Activated T-helper 2 cell treated with anti-CD3 and anti-CD28 coated beads, Interferon-gamma antibody, Interleukin-2, Interleukin-4, amounts not matched to agents 10 μg/mL and 5 μg/mL and 100 μg/mL, durations not matched to agents 14 hours and 24 hours and 36 hours (primary cell): ENCODE measurements at regions of chrX and their contacts with region 1.

Region 1: DNA sequence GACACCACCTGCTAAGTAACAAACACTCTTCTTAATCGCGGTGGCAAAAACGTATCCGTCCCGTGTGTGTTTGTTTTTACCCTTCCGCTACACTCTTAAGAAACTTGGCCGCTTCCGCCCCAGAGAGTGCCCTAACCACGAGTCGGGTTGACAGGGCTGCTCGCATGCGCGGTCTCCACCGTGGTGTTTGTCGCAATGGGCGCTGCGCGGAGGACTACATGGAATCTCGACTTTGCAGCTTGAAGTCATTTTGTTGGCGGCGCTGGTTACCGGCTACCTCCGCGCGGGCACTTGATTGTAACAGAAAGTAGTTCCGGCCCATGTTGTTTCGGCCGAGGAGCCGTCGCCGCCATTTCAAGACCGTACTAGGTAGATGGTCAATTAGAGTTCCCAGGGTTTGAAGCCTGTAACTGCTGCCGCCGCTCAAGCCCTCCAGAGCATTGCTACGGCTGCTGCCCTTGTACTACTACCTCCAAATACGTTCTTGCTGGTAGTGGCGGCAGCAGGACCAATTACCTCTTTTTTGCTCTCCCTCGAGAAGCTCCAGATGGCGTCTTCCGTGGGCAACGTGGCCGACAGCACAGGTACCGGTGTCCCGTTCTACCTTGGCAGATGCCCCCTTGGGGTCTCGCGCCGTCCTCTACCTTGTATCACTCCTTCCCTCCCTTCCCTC is at the start of gene OGT:
- DNase-seq: peak; percentile 92
- H3K4me3 Mint-ChIP-seq: peak within 1 kb of the TSS; percentile 99
- H3K27ac Mint-ChIP-seq: peak within 1 kb of the TSS; percentile 99
- H3K4me1 Mint-ChIP-seq: peaks cover 22% of the 10 kb centered on the region
- H3K27me3 Mint-ChIP-seq: no peaks in the 10 kb centered on the region
- total RNA-seq, gene OGT: 224 and 231 TPM in 2 replicates

Region 2: DNA sequence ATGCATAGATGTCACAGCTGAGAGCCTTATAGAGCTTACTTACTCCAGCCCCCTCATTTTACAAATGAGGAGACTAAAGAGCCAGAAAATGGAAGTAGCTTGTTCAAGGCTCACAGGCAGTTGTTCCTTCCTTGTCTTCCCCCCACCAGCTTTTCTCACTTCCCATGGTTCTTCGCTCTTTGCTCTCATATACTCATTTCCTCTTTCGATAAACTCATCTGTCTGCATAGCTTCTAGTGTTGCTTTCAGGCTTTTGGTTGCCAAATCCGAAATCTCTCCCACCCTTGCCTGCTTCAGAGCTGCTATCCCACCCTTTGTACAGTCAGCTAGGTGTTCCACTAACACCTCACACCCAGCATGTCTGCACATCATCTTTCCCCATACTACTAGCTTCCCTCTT is 334.8 kb before region 1 on chrX:
- intact Hi-C with region 1: loop called (anchors 10 kb)
- DNase-seq: no peak
- H3K4me3 Mint-ChIP-seq: peak overlapping the region; percentile 86
- H3K27ac Mint-ChIP-seq: peak overlapping the region; percentile 88
- H3K4me1 Mint-ChIP-seq: peaks cover 15% of the 10 kb centered on the region
- H3K27me3 Mint-ChIP-seq: no peaks in the 10 kb centered on the region

Region 3: GRCh38 chrX:71365876-71366673 is 166.8 kb before region 1 on chrX and contains the start of gene TAF1:
- intact Hi-C with region 1: loop called (anchors 1 kb)
- DNase-seq: peak; percentile 88
- H3K4me3 Mint-ChIP-seq: peak within 1 kb of the TSS; percentile 98
- H3K27ac Mint-ChIP-seq: peak within 1 kb of the TSS; percentile 99
- H3K4me1 Mint-ChIP-seq: peaks cover 20% of the 10 kb centered on the region
- H3K27me3 Mint-ChIP-seq: no peaks in the 10 kb centered on the region
- total RNA-seq, gene TAF1: 48.0 and 49.6 TPM in 2 replicates

Region 4: GRCh38 chrX:71514367-71515038 is 18.4 kb before region 1 on chrX:
- intact Hi-C with region 1: loop called (anchors 1 kb)
- DNase-seq: peak; percentile 12
- H3K4me3 Mint-ChIP-seq: peak overlapping the region; percentile 5
- H3K27ac Mint-ChIP-seq: peak overlapping the region; percentile 48
- H3K4me1 Mint-ChIP-seq: peaks cover 16% of the 10 kb centered on the region
- H3K27me3 Mint-ChIP-seq: no peaks in the 10 kb centered on the region

Region 5: DNA sequence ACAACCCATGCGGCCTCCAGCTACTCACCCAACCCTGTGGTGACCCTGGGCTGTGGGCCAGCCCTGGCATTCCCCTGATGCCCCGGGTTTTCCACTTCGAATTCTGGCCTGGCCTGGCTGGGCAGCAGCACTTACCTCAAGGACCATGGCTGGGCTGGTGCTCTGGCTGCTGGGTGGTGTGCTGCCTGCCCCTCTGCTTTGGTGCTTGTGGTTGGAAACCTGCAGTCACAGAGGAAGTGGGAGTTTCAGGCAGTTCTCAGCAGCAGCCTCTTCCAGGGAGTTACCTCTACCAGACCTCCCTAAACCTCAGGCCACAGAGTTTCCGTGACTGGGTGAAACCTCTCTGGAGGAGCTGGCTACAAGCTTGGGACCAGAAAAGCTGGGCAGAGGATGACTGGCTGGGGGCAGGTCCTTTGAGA is 85.4 kb after region 1 on chrX and contains the start of gene CXCR3:
- intact Hi-C with region 1: loop called (anchors 1 kb)
- DNase-seq: peak; percentile 58
- H3K4me3 Mint-ChIP-seq: peak within 1 kb of the TSS; percentile 79
- H3K27ac Mint-ChIP-seq: peak within 1 kb of the TSS; percentile 95
- H3K4me1 Mint-ChIP-seq: peaks cover 61% of the 10 kb centered on the region
- H3K27me3 Mint-ChIP-seq: no peaks in the 10 kb centered on the region
- total RNA-seq, gene CXCR3: 11.1 and 11.4 TPM in 2 replicates